Mammary epithelial cell (primary cell): ENCODE measurements at regions of chr3 and their contacts with region 1.

Region 1: DNA sequence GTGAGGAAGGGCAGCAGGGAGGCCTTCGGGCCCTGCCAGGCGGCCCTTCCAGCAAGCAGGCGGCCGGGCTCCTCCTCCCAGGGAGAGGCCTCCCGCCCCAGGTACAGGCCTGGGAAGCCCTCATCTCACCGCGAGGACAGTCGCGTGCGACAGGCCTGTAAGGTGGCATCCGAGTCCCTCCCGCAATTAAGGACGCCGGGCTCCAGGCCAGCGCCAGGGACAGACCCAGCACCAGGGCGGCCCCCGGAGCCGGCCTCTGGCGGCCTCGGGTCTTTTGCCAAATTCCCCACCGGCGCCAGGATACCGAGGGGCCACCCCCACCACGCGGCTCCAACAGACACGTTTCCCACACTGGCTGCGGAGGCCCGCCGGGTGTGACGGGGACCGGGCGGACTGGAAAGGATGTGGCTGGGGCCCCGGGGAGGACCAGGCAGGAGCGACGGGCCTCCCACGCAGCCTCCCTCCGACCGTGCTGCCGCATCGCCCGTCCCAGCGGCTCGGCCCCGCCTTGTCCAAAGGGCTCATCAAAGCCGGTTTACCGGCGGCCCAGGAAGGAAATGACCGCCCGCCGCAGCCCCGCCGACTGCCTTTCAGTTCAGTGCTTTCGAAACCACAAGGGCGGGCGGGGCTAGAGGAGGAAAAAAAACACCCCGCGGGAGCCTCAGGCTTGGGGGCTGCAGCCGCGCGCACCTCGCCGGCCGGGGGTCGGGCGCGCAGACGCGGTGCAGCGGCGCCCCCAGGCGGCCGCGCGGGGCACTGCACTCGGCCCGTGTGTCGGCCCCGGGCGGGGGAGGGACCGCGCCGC is 11.3 kb downstream of the XXYLT1 start:
- DNase-seq: peak; percentile 85
- H3K4me3 ChIP-seq: peak overlapping the region; percentile 57 to 64 (median 60)
- H3K27ac ChIP-seq: peak overlapping the region; percentile 32
- H3K4me1 ChIP-seq: peaks cover 19% of the 10 kb centered on the region
- H3K27me3 ChIP-seq: no peaks in the 10 kb centered on the region
- CTCF ChIP-seq: peak; percentile 51 to 61

Region 2: DNA sequence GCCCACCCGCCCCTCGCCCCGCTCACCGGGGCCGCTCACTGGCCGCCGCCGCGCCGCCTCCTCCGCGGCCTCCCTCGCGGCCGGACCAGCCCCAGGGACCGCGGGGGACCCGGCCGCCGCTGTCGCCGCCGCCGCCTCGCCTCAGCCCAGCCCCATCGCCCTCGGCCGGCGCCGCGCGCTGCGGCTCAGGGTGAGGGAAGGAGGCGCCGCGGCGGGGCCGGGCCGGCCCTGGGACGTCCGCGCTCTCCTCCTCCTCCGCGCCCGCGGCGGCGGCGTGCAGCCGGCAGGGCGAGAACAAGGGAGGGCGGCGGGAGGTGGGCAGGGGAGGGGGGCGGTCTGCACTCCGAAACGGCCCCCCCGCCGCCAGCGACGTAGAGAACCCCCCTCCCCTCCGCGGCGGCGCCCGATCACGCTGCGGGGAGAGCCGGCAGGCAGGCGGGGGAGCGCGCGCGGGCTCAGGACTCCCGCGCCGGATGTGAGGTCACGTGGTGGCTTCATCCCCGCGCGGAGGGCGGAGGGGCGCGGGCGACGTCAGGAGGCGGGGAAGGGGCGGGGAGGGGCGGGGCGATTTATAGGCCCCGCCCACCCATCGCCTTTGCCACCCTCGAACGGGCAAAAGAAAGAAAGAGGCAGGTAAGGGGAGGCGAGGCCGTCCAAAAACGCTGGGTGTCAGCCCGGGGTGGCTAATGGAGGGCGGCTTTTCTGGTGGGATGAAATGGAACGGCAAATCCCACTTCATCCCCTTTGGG is 773.0 kb before region 1 on chr3 and contains the start of gene ATP13A3:
- CTCF ChIA-PET with region 1: no interaction called
- dilution Hi-C with region 1: no loop called
- in situ Hi-C with region 1: no loop called
- intact Hi-C with region 1: loop called (anchors 10 kb)
- DNase-seq: peak; percentile 85
- H3K4me3 ChIP-seq: peak within 1 kb of the TSS; percentile 62 to 76 (median 64)
- H3K27ac ChIP-seq: peak within 1 kb of the TSS; percentile 76
- H3K4me1 ChIP-seq: peaks cover 34% of the 10 kb centered on the region
- H3K27me3 ChIP-seq: no peaks in the 10 kb centered on the region
- CTCF ChIP-seq: no peak
- total RNA-seq, gene ATP13A3: 151 to 226 TPM

Region 3: DNA sequence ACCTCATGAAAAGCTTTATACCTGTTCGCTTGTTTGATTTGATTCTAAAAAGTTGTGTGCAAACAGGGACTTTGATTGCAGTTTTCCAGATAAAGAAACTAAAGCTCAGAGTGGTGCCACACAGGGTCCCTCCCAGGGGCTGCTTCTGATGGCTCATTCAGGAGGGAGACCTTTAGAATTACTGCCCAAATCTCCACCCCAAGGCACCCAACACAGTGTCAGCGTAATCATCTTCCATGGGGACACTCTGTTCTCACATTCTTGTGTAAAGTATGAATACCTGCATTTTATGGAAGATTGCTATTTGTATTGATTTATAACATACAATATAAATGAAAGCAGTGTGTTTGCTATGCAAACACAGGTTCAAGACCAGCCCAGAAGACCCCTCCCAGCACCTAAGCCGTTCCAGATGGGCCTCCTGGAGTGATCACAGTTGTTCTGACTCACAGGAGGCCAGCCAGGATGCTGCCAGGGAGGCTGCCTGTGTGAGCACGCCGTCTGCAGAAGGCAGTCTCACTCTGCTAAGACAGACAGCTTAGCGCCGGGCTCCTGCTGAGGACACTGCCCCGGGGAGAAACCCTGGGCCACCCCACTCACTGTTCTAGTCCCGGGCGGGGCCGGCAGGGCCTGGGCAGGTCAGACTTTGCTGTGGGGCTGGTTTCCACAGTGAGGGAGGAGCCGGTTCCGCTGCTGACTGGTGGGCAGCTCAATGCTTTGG is 388.4 kb before region 1 on chr3:
- CTCF ChIA-PET with region 1: no interaction called
- dilution Hi-C with region 1: no loop called
- in situ Hi-C with region 1: no loop called
- intact Hi-C with region 1: loop called (anchors 5 kb)
- DNase-seq: peak; percentile 88
- H3K4me3 ChIP-seq: no peak overlapping the region
- H3K27ac ChIP-seq: peak overlapping the region; percentile 69
- H3K4me1 ChIP-seq: peaks cover 38% of the 10 kb centered on the region
- H3K27me3 ChIP-seq: no peaks in the 10 kb centered on the region
- CTCF ChIP-seq: peak in 1 of 2 donors; percentile 23

Region 4: GRCh38 chr3:195106418-195106906 is 153.2 kb before region 1 on chr3:
- CTCF ChIA-PET with region 1: no interaction called
- dilution Hi-C with region 1: no loop called
- in situ Hi-C with region 1: no loop called
- intact Hi-C with region 1: loop called (anchors 2 kb)
- DNase-seq: peak; percentile 25
- H3K4me3 ChIP-seq: peak overlapping the region in 1 of 3 experiments; percentile 45
- H3K27ac ChIP-seq: no peak overlapping the region
- H3K4me1 ChIP-seq: peaks cover 5% of the 10 kb centered on the region
- H3K27me3 ChIP-seq: no peaks in the 10 kb centered on the region
- CTCF ChIP-seq: peak; percentile 80 to 99

Region 5: GRCh38 chr3:195187609-195188425 is 71.9 kb before region 1 on chr3:
- CTCF ChIA-PET with region 1: no interaction called
- dilution Hi-C with region 1: loop called (anchors 5 kb)
- in situ Hi-C with region 1: no loop called
- intact Hi-C with region 1: loop called (anchors 5 kb)
- DNase-seq: peak; percentile 77
- H3K4me3 ChIP-seq: peak overlapping the region in 1 of 3 experiments; percentile 15
- H3K27ac ChIP-seq: peak overlapping the region; percentile 90
- H3K4me1 ChIP-seq: peaks cover 32% of the 10 kb centered on the region
- H3K27me3 ChIP-seq: no peaks in the 10 kb centered on the region
- CTCF ChIP-seq: no peak